Sigmoid colon (tissue), 7 donors: ENCODE measurements at regions of chr18 and their contacts with region 1.

Region 1: DNA sequence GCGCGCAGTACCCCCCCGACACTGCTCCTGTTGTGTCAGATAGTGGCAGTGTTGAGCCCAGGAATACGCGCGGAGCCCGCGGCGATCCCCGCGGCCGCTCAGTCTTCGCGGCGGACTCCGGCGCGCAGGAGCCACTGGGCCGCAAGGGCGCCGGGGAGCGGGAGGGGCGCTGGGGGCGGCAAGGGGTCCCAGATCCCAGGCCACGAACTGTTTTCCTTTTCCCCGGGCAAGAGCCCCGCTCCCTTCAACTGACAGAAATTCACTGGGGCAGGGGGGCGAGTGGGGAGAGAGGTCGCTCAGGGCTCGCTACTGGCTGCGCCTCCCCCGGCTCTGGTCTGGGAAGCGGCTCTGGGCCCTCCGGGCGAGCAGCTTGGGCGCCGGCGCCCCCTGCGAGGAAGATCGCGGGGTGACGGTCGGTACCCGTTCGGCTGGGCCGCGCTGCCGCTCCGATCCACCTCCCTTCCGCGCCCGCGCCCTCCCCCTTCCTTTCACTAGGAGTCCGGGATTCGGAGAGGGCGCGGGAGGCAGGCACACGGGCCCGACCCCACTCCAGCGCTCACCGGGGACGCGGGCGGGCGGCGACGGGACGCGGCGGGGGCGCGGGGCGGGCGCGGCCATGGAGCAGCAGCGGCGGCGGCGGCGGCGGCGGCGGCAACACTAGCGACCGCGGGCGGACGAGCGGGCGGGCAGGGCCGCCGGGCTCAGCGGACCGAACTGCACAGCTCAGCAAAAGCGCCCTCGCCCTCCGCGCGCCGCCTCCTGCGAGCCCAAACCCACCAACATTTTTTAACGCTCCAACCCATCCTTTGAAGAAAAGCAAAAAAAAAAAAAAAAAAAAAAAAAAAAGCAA is 1.4 kb upstream of the SETBP1 start:
- DNase-seq: peak; percentile 94
- H3K4me3 ChIP-seq: peak overlapping the region; percentile 64 to 94 (median 84)
- H3K27ac ChIP-seq: peak overlapping the region; percentile 93 to 99 (median 98)
- H3K4me1 ChIP-seq: peaks cover 0 to 34% (median 32%) of the 10 kb centered on the region in 4 donors
- H3K27me3 ChIP-seq: no peaks in the 10 kb centered on the region
- CTCF ChIP-seq: peak; percentile 42 to 65 (median 46)
- EP300 ChIP-seq: no peak
- POLR2A ChIP-seq: peak; percentile 66 to 79

Region 2: GRCh38 chr18:43620936-43621335 is 1058.3 kb before region 1 on chr18:
- intact Hi-C with region 1: loop called (anchors 10 kb)
- DNase-seq: no peak
- H3K4me3 ChIP-seq: no peak overlapping the region
- H3K27ac ChIP-seq: no peak overlapping the region
- H3K4me1 ChIP-seq: no peaks in the 10 kb centered on the region
- H3K27me3 ChIP-seq: no peaks in the 10 kb centered on the region
- CTCF ChIP-seq: peak in 3 of 4 experiments; percentile 35 to 63 (median 50)
- EP300 ChIP-seq: no peak
- POLR2A ChIP-seq: no peak

Region 3: DNA sequence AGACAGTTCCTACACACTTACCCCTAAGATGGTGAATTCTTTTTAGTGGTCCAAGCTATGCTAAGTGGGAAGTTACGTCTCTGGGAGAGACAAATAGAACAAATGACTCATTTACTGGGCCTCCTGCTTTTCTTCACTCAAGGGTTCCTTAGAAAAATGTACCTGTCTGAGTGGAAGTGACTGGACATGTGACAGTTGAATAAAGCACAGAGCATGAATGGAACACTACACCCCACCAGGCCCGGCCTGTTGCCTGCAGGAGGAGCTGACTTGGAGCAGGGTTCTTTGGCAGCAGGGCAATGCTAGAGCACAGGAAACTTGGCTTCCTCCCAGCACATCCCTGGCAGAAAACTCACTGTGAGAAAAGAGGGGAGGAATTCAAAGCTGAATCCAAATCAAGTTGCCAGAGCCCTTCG is 449.6 kb before region 1 on chr18:
- intact Hi-C with region 1: loop called (anchors 10 kb)
- DNase-seq: peak; percentile 92
- H3K4me3 ChIP-seq: no peak overlapping the region
- H3K27ac ChIP-seq: peak overlapping the region; percentile 5 to 69 (median 50)
- H3K4me1 ChIP-seq: peaks cover 0 to 41% (median 29%) of the 10 kb centered on the region in 4 donors
- H3K27me3 ChIP-seq: no peaks in the 10 kb centered on the region
- CTCF ChIP-seq: peak in 1 of 4 experiments; percentile 12
- EP300 ChIP-seq: peak; percentile 45 to 88 (median 79)
- POLR2A ChIP-seq: no peak

Region 4: DNA sequence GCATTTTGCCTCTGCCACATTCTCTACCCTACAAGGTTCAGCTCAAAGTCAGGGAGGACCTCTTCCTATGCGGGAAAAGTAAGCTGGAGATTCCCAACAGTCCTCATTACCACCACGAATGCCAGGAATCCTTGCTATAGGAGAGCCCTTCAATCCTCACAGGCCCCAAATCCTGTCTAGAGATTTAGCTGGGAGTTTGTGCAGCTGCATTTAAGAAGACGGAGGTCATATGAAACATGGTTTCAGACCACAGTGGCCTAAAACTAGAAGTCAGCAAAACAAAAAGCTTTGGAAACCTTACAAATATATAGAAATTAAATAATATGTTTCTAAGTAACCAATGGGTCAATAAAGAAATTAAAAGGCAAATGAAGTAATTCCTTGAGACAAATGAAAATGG is 413.8 kb before region 1 on chr18:
- intact Hi-C with region 1: no loop called
- DNase-seq: no peak
- H3K4me3 ChIP-seq: no peak overlapping the region
- H3K27ac ChIP-seq: no peak overlapping the region
- H3K4me1 ChIP-seq: no peaks in the 10 kb centered on the region
- H3K27me3 ChIP-seq: no peaks in the 10 kb centered on the region
- CTCF ChIP-seq: no peak
- EP300 ChIP-seq: no peak
- POLR2A ChIP-seq: no peak

Region 5: DNA sequence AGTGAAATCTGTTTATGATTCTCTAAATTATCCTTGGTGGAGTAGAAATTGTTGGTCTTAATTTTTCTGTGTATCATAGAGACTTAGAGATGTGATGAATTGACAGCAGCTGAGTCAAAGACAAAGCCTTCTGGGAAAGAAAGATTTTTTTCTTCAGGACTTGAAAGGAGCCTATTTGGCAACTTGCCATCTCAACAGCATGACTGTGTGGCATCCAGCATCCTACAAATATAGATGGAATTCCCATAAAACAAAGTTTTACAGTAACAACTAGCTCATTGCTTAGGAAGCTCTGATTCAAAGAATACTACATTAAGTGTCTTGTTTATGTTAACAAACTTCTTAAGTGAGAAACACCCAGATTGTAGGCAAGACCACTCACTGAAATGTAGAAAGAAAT is 77.8 kb before region 1 on chr18:
- intact Hi-C with region 1: no loop called
- DNase-seq: no peak
- H3K4me3 ChIP-seq: no peak overlapping the region
- H3K27ac ChIP-seq: no peak overlapping the region
- H3K4me1 ChIP-seq: peaks cover 0 to 24% (median 5%) of the 10 kb centered on the region in 4 donors
- H3K27me3 ChIP-seq: no peaks in the 10 kb centered on the region
- CTCF ChIP-seq: no peak
- EP300 ChIP-seq: no peak
- POLR2A ChIP-seq: no peak

Region 6: DNA sequence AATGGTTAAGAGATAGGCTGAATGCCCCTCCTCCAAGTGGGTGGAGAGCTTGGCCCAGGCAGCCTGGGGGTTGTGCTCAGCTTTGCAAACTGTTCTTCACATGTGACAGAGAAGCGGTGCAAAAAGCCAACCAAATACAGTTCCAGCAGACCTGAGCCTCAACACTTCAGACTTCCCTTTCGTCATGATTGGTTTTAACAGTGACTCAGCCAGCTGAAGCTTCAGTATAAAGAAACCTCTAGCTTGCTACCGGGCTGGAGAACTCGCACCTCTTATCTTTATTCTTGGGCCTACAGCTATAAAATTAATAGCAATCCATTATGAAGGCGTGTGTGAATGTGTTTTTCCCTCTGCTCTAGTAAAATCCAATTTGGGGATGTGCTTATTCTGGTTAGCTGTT is 21.4 kb after region 1 on chr18:
- intact Hi-C with region 1: loop called (anchors 2 kb)
- DNase-seq: peak; percentile 86
- H3K4me3 ChIP-seq: peak overlapping the region in 2 of 4 donors; percentile 4 to 25
- H3K27ac ChIP-seq: peak overlapping the region; percentile 75 to 88 (median 82)
- H3K4me1 ChIP-seq: peaks cover 0 to 94% (median 71%) of the 10 kb centered on the region in 4 donors
- H3K27me3 ChIP-seq: no peaks in the 10 kb centered on the region
- CTCF ChIP-seq: no peak
- EP300 ChIP-seq: peak in 1 of 4 donors; percentile 36
- POLR2A ChIP-seq: peak in 1 of 2 donors; percentile 17

Region 7: DNA sequence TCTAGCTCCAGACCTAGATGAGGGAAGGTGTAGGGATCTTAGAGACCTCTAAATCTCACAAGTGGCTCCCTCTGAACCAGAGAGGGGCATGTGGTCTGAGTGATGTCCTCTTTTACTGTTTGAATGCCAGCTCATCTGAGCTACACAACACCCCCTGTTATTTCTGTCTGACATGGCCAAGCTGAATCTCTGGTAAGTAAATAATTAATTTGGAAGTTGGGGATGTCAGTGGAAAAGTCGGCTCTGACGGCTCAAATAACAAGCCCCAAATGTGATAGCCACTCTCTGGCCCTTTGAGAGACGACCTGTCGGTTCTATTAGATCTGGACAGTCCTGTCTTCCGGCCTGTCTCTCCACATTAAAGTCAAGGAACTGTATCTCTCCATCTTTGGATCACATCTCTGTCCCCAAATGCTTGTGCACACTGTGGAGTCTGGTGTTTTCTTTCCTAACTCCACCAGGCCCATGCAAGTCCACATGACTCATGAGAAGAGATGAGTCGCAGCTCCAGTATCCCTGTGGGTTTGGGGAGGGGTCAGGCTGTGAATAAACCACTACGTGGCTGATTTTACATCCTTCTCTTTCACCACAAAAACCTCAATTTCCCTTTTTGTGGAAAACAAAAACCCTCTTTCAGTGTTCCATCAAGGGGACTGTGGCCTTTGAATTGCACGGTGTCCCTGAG is 53.9 kb after region 1 on chr18:
- intact Hi-C with region 1: no loop called
- DNase-seq: no peak
- H3K4me3 ChIP-seq: no peak overlapping the region
- H3K27ac ChIP-seq: peak overlapping the region in 3 of 4 donors; percentile 43 to 82 (median 81)
- H3K4me1 ChIP-seq: peaks cover 0 to 86% (median 70%) of the 10 kb centered on the region in 4 donors
- H3K27me3 ChIP-seq: no peaks in the 10 kb centered on the region
- CTCF ChIP-seq: no peak
- EP300 ChIP-seq: no peak
- POLR2A ChIP-seq: no peak

Region 8: DNA sequence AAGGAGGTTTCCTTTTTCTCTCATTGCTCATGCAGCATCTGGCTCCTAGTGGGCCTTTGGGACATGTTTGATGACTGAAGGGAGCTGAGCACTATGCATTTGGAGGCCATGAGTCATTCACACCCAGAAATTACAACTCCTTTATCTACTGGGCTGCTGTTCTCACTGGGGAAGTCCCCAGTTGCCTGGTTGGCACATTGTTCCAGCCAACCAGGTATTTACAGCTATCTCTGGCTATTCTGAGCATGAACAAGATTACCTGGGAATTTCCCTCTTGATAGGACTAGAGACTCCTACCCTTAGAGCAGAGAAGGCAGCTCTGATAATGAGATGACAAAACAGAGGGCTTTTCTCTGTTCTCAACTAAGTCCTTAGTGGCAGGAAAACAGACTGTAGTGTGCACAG is 207.9 kb after region 1 on chr18:
- intact Hi-C with region 1: loop called (anchors 5 kb)
- DNase-seq: no peak
- H3K4me3 ChIP-seq: no peak overlapping the region
- H3K27ac ChIP-seq: peak overlapping the region in 2 of 4 donors; percentile 11 to 13
- H3K4me1 ChIP-seq: peaks cover 0 to 18% (median 7%) of the 10 kb centered on the region in 4 donors
- H3K27me3 ChIP-seq: no peaks in the 10 kb centered on the region
- CTCF ChIP-seq: no peak
- EP300 ChIP-seq: no peak
- POLR2A ChIP-seq: no peak

Region 9: GRCh38 chr18:45106331-45106774 is 427.1 kb after region 1 on chr18:
- intact Hi-C with region 1: loop called (anchors 10 kb)
- DNase-seq: no peak
- H3K4me3 ChIP-seq: no peak overlapping the region
- H3K27ac ChIP-seq: no peak overlapping the region
- H3K4me1 ChIP-seq: peaks cover 0 to 11% (median 10%) of the 10 kb centered on the region in 4 donors
- H3K27me3 ChIP-seq: no peaks in the 10 kb centered on the region
- CTCF ChIP-seq: no peak
- EP300 ChIP-seq: no peak
- POLR2A ChIP-seq: no peak

Region 10: DNA sequence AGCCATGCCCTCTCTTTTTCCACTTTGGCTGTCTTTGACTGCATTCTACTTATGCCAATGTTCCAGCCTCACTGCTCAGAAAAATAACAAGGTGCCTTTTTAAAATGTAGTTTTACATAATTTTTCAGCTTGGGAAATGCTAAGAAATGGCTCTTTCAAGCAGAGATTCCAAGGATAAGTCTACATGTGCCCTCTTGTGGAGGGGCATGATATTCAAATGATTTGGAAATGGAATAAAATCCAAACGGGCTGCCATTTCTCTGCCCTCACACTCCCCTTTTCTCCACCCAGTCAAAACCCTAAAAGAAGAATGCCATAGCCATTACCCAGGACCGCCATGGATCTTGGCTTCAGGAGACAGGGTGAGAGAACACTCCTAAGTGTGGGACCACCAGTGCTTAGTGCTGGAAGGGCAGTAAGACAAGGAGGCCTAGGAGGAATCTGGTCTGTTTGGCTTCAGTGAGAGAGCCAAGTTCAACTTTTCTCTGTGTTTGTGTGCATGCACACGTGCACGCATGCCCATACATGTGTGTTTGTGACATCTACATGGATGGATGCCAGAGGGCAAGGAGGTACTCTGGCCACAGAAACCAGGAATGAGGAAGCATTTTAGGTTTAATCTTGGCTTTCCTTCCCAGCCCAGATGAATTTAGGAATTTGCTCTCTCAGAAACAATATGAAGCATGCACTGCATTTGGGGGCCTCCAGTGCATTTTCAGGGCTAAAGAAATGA is 762.0 kb after region 1 on chr18:
- intact Hi-C with region 1: loop called (anchors 5 kb)
- DNase-seq: no peak
- H3K4me3 ChIP-seq: no peak overlapping the region
- H3K27ac ChIP-seq: no peak overlapping the region
- H3K4me1 ChIP-seq: peaks cover 0 to 19% (median 3%) of the 10 kb centered on the region in 4 donors
- H3K27me3 ChIP-seq: no peaks in the 10 kb centered on the region
- CTCF ChIP-seq: peak in 1 of 4 experiments; percentile 13
- EP300 ChIP-seq: no peak
- POLR2A ChIP-seq: no peak